MCF 10A (cell line): ENCODE measurements at regions of chr6 and their contacts with region 1.

Region 1: DNA sequence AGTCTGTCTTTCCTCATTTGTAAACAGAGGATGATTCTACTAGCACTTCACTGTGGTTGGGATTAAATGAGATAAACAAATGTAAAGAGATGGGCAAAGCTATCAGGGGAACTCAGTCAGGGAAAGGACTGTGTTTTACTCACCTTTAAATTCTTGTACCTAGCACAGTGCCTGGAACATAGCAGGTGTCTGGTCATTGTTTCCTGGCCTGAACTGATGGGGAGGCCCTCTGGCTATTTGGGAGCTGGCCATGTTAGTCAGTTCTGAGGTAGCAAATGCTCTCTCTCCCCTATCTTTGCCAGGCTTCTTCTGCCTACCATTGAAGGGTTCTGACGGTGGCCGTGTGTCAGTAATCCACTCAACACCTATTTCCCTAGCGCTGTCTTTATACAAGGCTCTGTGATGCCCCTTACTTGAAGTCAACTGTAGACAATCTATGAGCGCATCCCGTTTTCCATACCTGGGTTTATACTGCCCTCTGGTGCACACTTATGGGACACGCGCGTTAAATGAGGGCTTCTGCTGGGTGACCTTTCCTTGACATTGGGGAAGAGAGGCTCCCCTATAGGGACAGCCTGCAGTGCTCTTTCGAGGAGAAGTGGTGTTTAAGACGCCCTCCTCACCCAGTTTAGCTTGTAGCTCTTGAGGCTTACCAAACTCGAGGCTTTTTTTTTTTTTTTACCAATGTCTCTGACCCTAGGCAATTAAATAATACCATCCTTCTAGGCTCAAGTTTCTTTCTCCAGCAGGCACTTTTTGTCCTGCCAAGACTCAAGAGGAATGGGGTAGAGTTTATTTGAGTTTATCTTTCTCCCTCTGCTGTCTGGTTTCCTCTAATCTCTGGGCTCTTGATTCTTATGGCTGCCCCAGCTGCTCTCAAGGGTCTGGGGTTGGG is 4.0 kb upstream of the SPATS1 start:
- DNase-seq: peak; percentile 77
- H3K4me3 Mint-ChIP-seq: no peak overlapping the region
- H3K27ac Mint-ChIP-seq: no peak overlapping the region
- H3K4me1 Mint-ChIP-seq: no peaks in the 10 kb centered on the region
- H3K27me3 Mint-ChIP-seq: peaks cover 40% of the 10 kb centered on the region
- CTCF ChIP-seq: peak; percentile 60

Region 2: GRCh38 chr6:44096612-44097011 is 241.9 kb before region 1 on chr6:
- CTCF ChIA-PET with region 1: interaction called, 5 read pairs
- POLR2A ChIA-PET with region 1: no interaction called
- intact Hi-C with region 1: loop called (anchors 1 kb)
- DNase-seq: peak; percentile 85
- H3K4me3 Mint-ChIP-seq: no peak overlapping the region
- H3K27ac Mint-ChIP-seq: no peak overlapping the region
- H3K4me1 Mint-ChIP-seq: peaks cover 13% of the 10 kb centered on the region
- H3K27me3 Mint-ChIP-seq: no peaks in the 10 kb centered on the region
- CTCF ChIP-seq: peak; percentile 85

Region 3: GRCh38 chr6:44237813-44238433 is 100.6 kb before region 1 on chr6:
- CTCF ChIA-PET with region 1: interaction called, 17 read pairs
- POLR2A ChIA-PET with region 1: no interaction called
- intact Hi-C with region 1: no loop called
- DNase-seq: peak; percentile 69
- H3K4me3 Mint-ChIP-seq: peak overlapping the region; percentile 86
- H3K27ac Mint-ChIP-seq: peak overlapping the region; percentile 85
- H3K4me1 Mint-ChIP-seq: peaks cover 22% of the 10 kb centered on the region
- H3K27me3 Mint-ChIP-seq: no peaks in the 10 kb centered on the region
- CTCF ChIP-seq: peak; percentile 94

Region 4: GRCh38 chr6:44272999-44273566 is 65.4 kb before region 1 on chr6:
- CTCF ChIA-PET with region 1: interaction called, 214 read pairs
- POLR2A ChIA-PET with region 1: interaction called, 17 read pairs
- intact Hi-C with region 1: loop called (anchors 1 kb)
- DNase-seq: no peak
- H3K4me3 Mint-ChIP-seq: no peak overlapping the region
- H3K27ac Mint-ChIP-seq: no peak overlapping the region
- H3K4me1 Mint-ChIP-seq: no peaks in the 10 kb centered on the region
- H3K27me3 Mint-ChIP-seq: peaks cover 51% of the 10 kb centered on the region
- CTCF ChIP-seq: no peak

Region 5: GRCh38 chr6:44312901-44313788 is 25.3 kb before region 1 on chr6 and contains the start of gene AARS2:
- CTCF ChIA-PET with region 1: interaction called, 33 read pairs
- POLR2A ChIA-PET with region 1: interaction called, 4 read pairs
- intact Hi-C with region 1: no loop called
- DNase-seq: peak; percentile 83
- H3K4me3 Mint-ChIP-seq: peak within 1 kb of the TSS; percentile 98
- H3K27ac Mint-ChIP-seq: peak within 1 kb of the TSS; percentile 94
- H3K4me1 Mint-ChIP-seq: peaks cover 25% of the 10 kb centered on the region
- H3K27me3 Mint-ChIP-seq: peaks cover 23% of the 10 kb centered on the region
- CTCF ChIP-seq: peak; percentile 96
- total RNA-seq, gene AARS2: 15.5 and 23.2 TPM in 2 replicates

Region 6: DNA sequence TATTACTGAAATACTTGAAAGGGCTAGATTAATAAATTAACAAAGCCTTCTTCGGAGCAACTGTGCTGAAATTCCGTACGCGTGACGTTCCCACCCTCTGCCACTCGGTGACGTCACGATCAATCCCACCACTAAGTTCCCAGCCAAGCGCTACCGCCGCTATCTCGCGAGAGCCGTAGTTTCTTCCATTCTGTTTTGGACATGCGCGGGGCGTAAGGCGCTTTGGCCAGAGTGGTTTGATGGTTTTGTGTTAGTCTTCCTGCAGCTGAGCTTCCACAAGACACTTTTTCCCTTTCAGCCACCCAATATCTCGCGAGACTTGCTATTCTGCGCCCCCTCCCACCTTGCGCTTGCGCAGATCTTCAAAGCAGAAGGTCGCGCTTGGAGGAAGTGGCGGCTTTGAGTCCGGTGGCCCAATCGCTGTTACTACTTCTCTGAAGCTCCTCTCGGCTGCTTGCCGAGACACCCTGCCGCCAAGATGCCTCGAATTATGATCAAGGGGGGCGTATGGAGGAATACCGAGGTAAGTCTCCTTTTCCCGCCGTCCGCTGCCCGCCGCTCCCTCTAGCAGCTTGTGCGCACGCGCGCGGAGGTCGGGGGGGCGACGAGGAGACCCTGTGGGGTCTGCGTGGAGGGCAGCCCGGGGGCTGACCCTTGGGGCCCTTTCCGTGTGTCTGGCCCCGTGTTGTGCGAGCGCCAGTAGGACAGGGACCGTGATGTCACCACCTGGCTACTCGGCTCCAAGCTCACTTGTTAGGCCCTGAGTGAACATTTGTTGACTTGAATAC is 49.1 kb after region 1 on chr6 and contains the start of gene CDC5L:
- CTCF ChIA-PET with region 1: interaction called, 6 read pairs
- POLR2A ChIA-PET with region 1: interaction called, 22 read pairs
- intact Hi-C with region 1: no loop called
- DNase-seq: peak; percentile 96
- H3K4me3 Mint-ChIP-seq: peak within 1 kb of the TSS; percentile 98
- H3K27ac Mint-ChIP-seq: peak within 1 kb of the TSS; percentile 98
- H3K4me1 Mint-ChIP-seq: peaks cover 20% of the 10 kb centered on the region
- H3K27me3 Mint-ChIP-seq: no peaks in the 10 kb centered on the region
- CTCF ChIP-seq: no peak
- total RNA-seq, gene CDC5L: 23.1 and 26.4 TPM in 2 replicates

Region 7: GRCh38 chr6:44762496-44762895 is 424.0 kb after region 1 on chr6:
- CTCF ChIA-PET with region 1: no interaction called
- POLR2A ChIA-PET with region 1: no interaction called
- intact Hi-C with region 1: no loop called
- DNase-seq: no peak
- H3K4me3 Mint-ChIP-seq: no peak overlapping the region
- H3K27ac Mint-ChIP-seq: no peak overlapping the region
- H3K4me1 Mint-ChIP-seq: no peaks in the 10 kb centered on the region
- H3K27me3 Mint-ChIP-seq: no peaks in the 10 kb centered on the region
- CTCF ChIP-seq: no peak